Naive thymus-derived CD4-positive, alpha-beta T cell (primary cell): ENCODE measurements at regions of chr1 and their contacts with region 1.

Region 1: GRCh38 chr1:205255941-205256780 is 28.4 kb downstream of the TMCC2 start:
- DNase-seq: peak; percentile 67 to 88 (median 79)
- ATAC-seq: peak; percentile 96
- H3K4me3 ChIP-seq: no peak overlapping the region
- H3K4me3 Mint-ChIP-seq: no peak overlapping the region
- H3K27ac ChIP-seq: no peak overlapping the region
- H3K27ac Mint-ChIP-seq: no peak overlapping the region
- H3K4me1 ChIP-seq: no peaks in the 10 kb centered on the region
- H3K4me1 Mint-ChIP-seq: peaks cover 0 to 7% (median 0%) of the 10 kb centered on the region in 7 donors
- H3K27me3 ChIP-seq: no peaks in the 10 kb centered on the region
- H3K27me3 Mint-ChIP-seq: no peaks in the 10 kb centered on the region

Region 2: GRCh38 chr1:204989266-204990058 is 266.7 kb before region 1 on chr1:
- CTCF ChIA-PET with region 1: interaction called, 3 read pairs
- POLR2A ChIA-PET with region 1: no interaction called
- intact Hi-C with region 1: loop called in 1 of 2 experiments (anchors 1 kb)
- DNase-seq: peak; percentile 25 to 57 (median 44)
- ATAC-seq: peak; percentile 83
- H3K4me3 ChIP-seq: no peak overlapping the region
- H3K4me3 Mint-ChIP-seq: no peak overlapping the region
- H3K27ac ChIP-seq: no peak overlapping the region
- H3K27ac Mint-ChIP-seq: peak overlapping the region in 1 of 9 donors; percentile 24
- H3K4me1 ChIP-seq: no peaks in the 10 kb centered on the region
- H3K4me1 Mint-ChIP-seq: peaks cover 10 to 22% (median 16%) of the 10 kb centered on the region in 7 donors
- H3K27me3 ChIP-seq: no peaks in the 10 kb centered on the region
- H3K27me3 Mint-ChIP-seq: peaks cover 0 to 8% (median 4%) of the 10 kb centered on the region in 5 donors

Region 3: GRCh38 chr1:205121660-205122488 is 134.3 kb before region 1 on chr1 and contains the start of gene RBBP5:
- CTCF ChIA-PET with region 1: interaction called, 25 read pairs
- POLR2A ChIA-PET with region 1: no interaction called
- intact Hi-C with region 1: loop called (anchors 1 kb)
- DNase-seq: peak; percentile 87 to 97 (median 93)
- ATAC-seq: peak; percentile 98
- H3K4me3 ChIP-seq: peak within 1 kb of the TSS; percentile 89
- H3K4me3 Mint-ChIP-seq: peak within 1 kb of the TSS; percentile 89 to 99 (median 96)
- H3K27ac ChIP-seq: peak within 1 kb of the TSS; percentile 86
- H3K27ac Mint-ChIP-seq: peak within 1 kb of the TSS; percentile 98 to 100 (median 99)
- H3K4me1 ChIP-seq: peaks cover 18 to 24% of the 10 kb centered on the region in 2 donors
- H3K4me1 Mint-ChIP-seq: peaks cover 30 to 56% (median 51%) of the 10 kb centered on the region in 7 donors
- H3K27me3 ChIP-seq: no peaks in the 10 kb centered on the region
- H3K27me3 Mint-ChIP-seq: no peaks in the 10 kb centered on the region
- total RNA-seq, gene RBBP5: 11.0 to 31.5 (median 21.0) TPM

Region 4: GRCh38 chr1:205172729-205173366 is 83.3 kb before region 1 on chr1:
- CTCF ChIA-PET with region 1: interaction called, 3 read pairs
- POLR2A ChIA-PET with region 1: no interaction called
- intact Hi-C with region 1: loop called in 1 of 2 experiments (anchors 5 kb)
- DNase-seq: no peak
- ATAC-seq: no peak
- H3K4me3 ChIP-seq: no peak overlapping the region
- H3K4me3 Mint-ChIP-seq: peak overlapping the region in 1 of 10 donors; percentile 28
- H3K27ac ChIP-seq: no peak overlapping the region
- H3K27ac Mint-ChIP-seq: peak overlapping the region in 2 of 9 donors; percentile 4 to 21
- H3K4me1 ChIP-seq: peaks cover 3 to 4% of the 10 kb centered on the region in 2 donors
- H3K4me1 Mint-ChIP-seq: peaks cover 12 to 42% (median 31%) of the 10 kb centered on the region in 7 donors
- H3K27me3 ChIP-seq: no peaks in the 10 kb centered on the region
- H3K27me3 Mint-ChIP-seq: no peaks in the 10 kb centered on the region

Region 5: DNA sequence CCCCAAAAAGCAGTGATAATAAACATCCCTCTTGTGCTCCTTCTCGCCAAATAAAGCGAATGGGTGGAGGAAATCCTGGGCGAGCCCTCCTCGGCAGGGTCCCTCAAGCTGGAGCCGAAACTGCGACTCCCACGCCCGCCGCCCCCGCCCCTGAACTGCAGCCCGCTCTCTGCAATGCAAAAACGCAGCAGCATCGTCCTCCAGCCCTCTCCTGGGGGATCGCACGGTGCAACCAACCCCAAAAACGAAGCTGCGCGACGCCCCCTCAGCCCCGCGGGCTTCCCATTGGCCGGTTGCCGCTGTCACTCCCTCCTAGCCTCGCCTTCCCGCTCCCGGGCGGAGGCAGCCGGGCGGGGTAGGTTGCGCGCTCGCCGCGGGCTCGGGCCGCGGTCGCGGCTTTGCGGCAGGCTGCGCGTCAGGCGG is 28.6 kb before region 1 on chr1 and contains the start of gene TMCC2:
- CTCF ChIA-PET with region 1: interaction called, 89 read pairs
- POLR2A ChIA-PET with region 1: interaction called, 6 read pairs
- intact Hi-C with region 1: loop called (anchors 1 kb)
- DNase-seq: peak; percentile 57 to 87 (median 73)
- ATAC-seq: peak; percentile 86
- H3K4me3 ChIP-seq: peak within 1 kb of the TSS; percentile 75
- H3K4me3 Mint-ChIP-seq: peak within 1 kb of the TSS; percentile 86 to 99 (median 94)
- H3K27ac ChIP-seq: peak within 1 kb of the TSS; percentile 1
- H3K27ac Mint-ChIP-seq: peak within 1 kb of the TSS; percentile 43 to 90 (median 82)
- H3K4me1 ChIP-seq: peaks cover 10 to 13% of the 10 kb centered on the region in 2 donors
- H3K4me1 Mint-ChIP-seq: peaks cover 12 to 51% (median 18%) of the 10 kb centered on the region in 7 donors
- H3K27me3 ChIP-seq: no peaks in the 10 kb centered on the region
- H3K27me3 Mint-ChIP-seq: peaks cover 0 to 44% (median 4%) of the 10 kb centered on the region in 5 donors
- total RNA-seq, gene TMCC2: 1.1 to 3.6 (median 1.8) TPM